Natural killer cell (primary cell): ENCODE measurements at regions of chr3 and their contacts with region 1.

Region 1: GRCh38 chr3:141370065-141370533 is 1.8 kb downstream of the ZBTB38 start:
- DNase-seq: peak; percentile 19 to 93
- ATAC-seq: peak; percentile 91 to 99 (median 93)
- H3K4me3 ChIP-seq: no peak overlapping the region
- H3K4me3 Mint-ChIP-seq: peak overlapping the region; percentile 6
- H3K27ac ChIP-seq: no peak overlapping the region
- H3K27ac Mint-ChIP-seq: peak overlapping the region in 1 of 2 donors; percentile 59
- H3K4me1 ChIP-seq: peaks cover 7% of the 10 kb centered on the region
- H3K4me1 Mint-ChIP-seq: peaks cover 9 to 24% of the 10 kb centered on the region in 2 donors
- H3K27me3 ChIP-seq: no peaks in the 10 kb centered on the region
- H3K27me3 Mint-ChIP-seq: no peaks in the 10 kb centered on the region
- CTCF ChIP-seq: peak; percentile 31

Region 2: GRCh38 chr3:141311496-141312353 is 58.4 kb before region 1 on chr3:
- intact Hi-C with region 1: loop called (anchors 2 kb)
- DNase-seq: peak; percentile 93 to 98
- ATAC-seq: peak; percentile 96 to 99 (median 98)
- H3K4me3 ChIP-seq: peak overlapping the region; percentile 64
- H3K4me3 Mint-ChIP-seq: peak overlapping the region; percentile 100
- H3K27ac ChIP-seq: peak overlapping the region; percentile 81
- H3K27ac Mint-ChIP-seq: peak overlapping the region; percentile 96 to 98
- H3K4me1 ChIP-seq: peaks cover 20% of the 10 kb centered on the region
- H3K4me1 Mint-ChIP-seq: peaks cover 30 to 31% of the 10 kb centered on the region in 2 donors
- H3K27me3 ChIP-seq: no peaks in the 10 kb centered on the region
- H3K27me3 Mint-ChIP-seq: no peaks in the 10 kb centered on the region
- CTCF ChIP-seq: peak; percentile 48